ENCODE measurements at regions of chr11 and their contacts with region 1.

Region 1: DNA sequence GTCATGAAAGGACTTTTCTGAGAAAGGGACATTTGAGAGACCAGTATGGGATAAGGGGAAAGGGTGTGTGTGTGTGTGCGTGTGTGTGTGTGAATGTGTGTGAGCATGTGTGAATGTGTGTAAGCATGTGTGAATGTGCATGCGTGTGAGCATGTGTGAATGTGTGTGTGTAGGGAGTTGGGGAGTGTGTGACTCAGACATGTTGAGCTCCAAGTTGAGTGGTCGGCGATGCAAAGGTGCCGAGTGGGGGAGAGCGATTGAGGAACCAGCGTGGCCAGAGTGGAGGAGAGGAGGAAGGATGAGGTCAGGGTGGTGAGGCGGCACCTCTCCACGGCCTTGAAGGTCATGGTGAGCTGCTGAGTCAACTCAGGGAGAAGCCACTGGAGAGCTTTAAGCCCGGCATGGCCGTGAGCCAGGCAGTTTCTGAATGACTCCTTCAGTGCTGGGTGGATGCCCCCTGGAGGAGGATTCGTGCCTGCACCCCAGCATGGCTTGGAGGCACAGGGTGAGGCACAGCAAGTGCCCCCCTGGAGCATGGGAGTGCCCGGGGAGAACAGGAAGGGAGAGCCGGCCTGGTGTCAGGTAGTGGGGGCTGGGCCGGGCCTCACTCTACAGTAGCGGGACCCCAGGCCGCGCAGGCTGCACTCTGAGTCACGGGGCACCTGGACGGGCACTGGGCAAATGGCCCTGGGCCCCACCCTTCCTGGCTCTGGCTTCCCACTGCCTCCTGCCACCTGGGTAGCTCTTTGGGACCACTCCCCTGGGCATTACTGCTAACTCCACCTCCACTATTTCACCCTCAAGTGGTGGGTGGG is 8.2 kb upstream of the CCDC88B start:
- DNase-seq: peak; percentile 41 to 86 (median 58)
- ATAC-seq: peak; percentile 93
- H3K4me3 ChIP-seq: no peak overlapping the region
- H3K4me3 Mint-ChIP-seq: no peak overlapping the region
- H3K27ac ChIP-seq: no peak overlapping the region
- H3K27ac Mint-ChIP-seq: peak overlapping the region; percentile 13
- H3K4me1 ChIP-seq: peaks cover 10% of the 10 kb centered on the region
- H3K4me1 Mint-ChIP-seq: peaks cover 9% of the 10 kb centered on the region
- H3K27me3 ChIP-seq: no peaks in the 10 kb centered on the region
- H3K27me3 Mint-ChIP-seq: no peaks in the 10 kb centered on the region
- CTCF ChIP-seq: peak; percentile 8

Region 2: DNA sequence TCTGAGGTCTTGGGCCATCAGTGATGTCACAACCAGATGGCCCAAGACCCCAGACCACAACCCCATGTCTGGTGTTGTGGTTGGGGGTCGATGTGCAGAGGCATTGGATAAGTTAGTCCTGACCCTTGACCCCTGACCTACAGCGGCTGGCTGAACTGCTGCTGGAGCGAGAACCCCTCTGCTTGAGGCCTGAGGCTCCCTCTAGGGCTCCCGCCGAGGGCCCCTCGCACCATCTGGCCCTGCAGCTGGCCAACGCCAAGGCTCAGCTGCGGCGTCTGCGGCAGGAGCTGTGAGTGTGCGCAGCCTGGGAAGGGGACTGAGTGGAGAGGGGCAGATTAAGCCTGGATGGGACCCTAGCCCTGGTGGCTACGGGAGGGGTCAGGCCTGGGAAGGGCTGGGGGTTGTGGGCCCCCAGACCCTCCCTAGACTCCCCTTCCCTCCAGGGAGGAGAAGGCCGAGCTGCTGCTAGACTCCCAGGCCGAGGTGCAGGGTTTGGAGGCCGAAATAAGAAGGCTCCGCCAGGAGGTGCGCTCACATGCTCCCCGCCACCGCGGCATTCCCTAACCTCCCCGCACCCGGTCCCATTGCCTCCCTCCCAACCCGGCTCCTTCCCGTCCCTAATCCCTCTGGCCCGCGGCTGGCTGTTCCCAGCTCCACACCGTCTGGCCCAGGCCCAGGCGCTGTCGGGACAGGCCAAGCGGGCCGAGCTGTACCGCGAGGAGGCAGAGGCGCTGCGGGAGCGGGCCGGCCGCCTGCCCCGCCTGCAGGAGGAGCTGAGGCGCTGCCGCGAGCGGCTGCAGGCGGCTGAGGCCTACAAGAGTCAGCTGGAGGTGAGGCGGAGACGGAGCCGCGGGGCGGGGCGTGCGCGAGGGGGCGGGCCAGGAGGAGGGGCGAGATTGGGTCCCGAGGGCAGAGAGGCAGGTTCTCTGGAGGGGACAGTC is 10.4 kb after region 1 on chr11:
- CTCF ChIA-PET with region 1: interaction called, 15 read pairs
- POLR2A ChIA-PET with region 1: interaction called, 3 read pairs
- intact Hi-C with region 1: no loop called
- DNase-seq: peak; percentile 78 to 94 (median 91)
- ATAC-seq: peak; percentile 68
- H3K4me3 ChIP-seq: peak overlapping the region; percentile 7
- H3K4me3 Mint-ChIP-seq: peak overlapping the region; percentile 34
- H3K27ac ChIP-seq: peak overlapping the region in 1 of 2 donors; percentile 50
- H3K27ac Mint-ChIP-seq: no peak overlapping the region
- H3K4me1 ChIP-seq: peaks cover 55% of the 10 kb centered on the region
- H3K4me1 Mint-ChIP-seq: peaks cover 54% of the 10 kb centered on the region
- H3K27me3 ChIP-seq: no peaks in the 10 kb centered on the region
- H3K27me3 Mint-ChIP-seq: no peaks in the 10 kb centered on the region
- CTCF ChIP-seq: no peak

Region 3: GRCh38 chr11:64372802-64373597 is 41.2 kb after region 1 on chr11:
- CTCF ChIA-PET with region 1: no interaction called
- POLR2A ChIA-PET with region 1: no interaction called
- intact Hi-C with region 1: no loop called
- DNase-seq: no peak
- ATAC-seq: no peak
- H3K4me3 ChIP-seq: no peak overlapping the region
- H3K4me3 Mint-ChIP-seq: no peak overlapping the region
- H3K27ac ChIP-seq: no peak overlapping the region
- H3K27ac Mint-ChIP-seq: no peak overlapping the region
- H3K4me1 ChIP-seq: peaks cover 3% of the 10 kb centered on the region
- H3K4me1 Mint-ChIP-seq: no peaks in the 10 kb centered on the region
- H3K27me3 ChIP-seq: no peaks in the 10 kb centered on the region
- H3K27me3 Mint-ChIP-seq: no peaks in the 10 kb centered on the region
- CTCF ChIP-seq: no peak